ENCODE measurements at regions of chr2 and their contacts with region 1.

Region 1: GRCh38 chr2:29309090-29310029 is 194.1 kb downstream of the CLIP4 start:
- DNase-seq: peak in 7 of 9 experiments; percentile 10 to 67 (median 35)
- ATAC-seq: peak; percentile 40
- H3K4me3 ChIP-seq: no peak overlapping the region
- H3K4me3 Mint-ChIP-seq: no peak overlapping the region
- H3K27ac ChIP-seq: no peak overlapping the region
- H3K27ac Mint-ChIP-seq: no peak overlapping the region
- H3K4me1 ChIP-seq: peaks cover 4% of the 10 kb centered on the region
- H3K4me1 Mint-ChIP-seq: peaks cover 11% of the 10 kb centered on the region
- H3K27me3 ChIP-seq: no peaks in the 10 kb centered on the region
- H3K27me3 Mint-ChIP-seq: peaks cover 24% of the 10 kb centered on the region
- CTCF ChIP-seq: peak; percentile 59

Region 2: DNA sequence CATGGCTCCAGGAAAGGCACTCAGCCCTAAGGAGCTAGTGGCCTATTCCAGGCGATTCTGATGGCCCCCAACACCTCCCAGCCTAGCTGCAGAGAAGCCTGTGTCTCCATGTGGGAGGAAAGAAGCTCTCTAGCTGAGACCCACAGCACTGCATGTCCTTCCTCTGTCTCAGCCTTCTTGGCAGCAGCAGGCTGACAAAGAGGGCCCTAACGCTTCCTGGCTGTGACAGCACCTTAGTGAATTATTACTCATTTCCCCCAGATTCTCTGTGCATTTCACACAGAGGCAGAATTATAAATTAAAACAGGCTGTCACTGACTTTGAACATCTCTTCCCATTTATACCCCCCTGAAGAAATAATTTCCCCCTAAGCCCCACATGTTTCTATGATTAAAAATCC is 12.7 kb after region 1 on chr2:
- CTCF ChIA-PET with region 1: interaction called, 16 read pairs
- POLR2A ChIA-PET with region 1: no interaction called
- intact Hi-C with region 1: no loop called
- DNase-seq: no peak
- ATAC-seq: no peak
- H3K4me3 ChIP-seq: no peak overlapping the region
- H3K4me3 Mint-ChIP-seq: no peak overlapping the region
- H3K27ac ChIP-seq: no peak overlapping the region
- H3K27ac Mint-ChIP-seq: no peak overlapping the region
- H3K4me1 ChIP-seq: no peaks in the 10 kb centered on the region
- H3K4me1 Mint-ChIP-seq: peaks cover 4% of the 10 kb centered on the region
- H3K27me3 ChIP-seq: no peaks in the 10 kb centered on the region
- H3K27me3 Mint-ChIP-seq: peaks cover 24% of the 10 kb centered on the region
- CTCF ChIP-seq: no peak

Region 3: DNA sequence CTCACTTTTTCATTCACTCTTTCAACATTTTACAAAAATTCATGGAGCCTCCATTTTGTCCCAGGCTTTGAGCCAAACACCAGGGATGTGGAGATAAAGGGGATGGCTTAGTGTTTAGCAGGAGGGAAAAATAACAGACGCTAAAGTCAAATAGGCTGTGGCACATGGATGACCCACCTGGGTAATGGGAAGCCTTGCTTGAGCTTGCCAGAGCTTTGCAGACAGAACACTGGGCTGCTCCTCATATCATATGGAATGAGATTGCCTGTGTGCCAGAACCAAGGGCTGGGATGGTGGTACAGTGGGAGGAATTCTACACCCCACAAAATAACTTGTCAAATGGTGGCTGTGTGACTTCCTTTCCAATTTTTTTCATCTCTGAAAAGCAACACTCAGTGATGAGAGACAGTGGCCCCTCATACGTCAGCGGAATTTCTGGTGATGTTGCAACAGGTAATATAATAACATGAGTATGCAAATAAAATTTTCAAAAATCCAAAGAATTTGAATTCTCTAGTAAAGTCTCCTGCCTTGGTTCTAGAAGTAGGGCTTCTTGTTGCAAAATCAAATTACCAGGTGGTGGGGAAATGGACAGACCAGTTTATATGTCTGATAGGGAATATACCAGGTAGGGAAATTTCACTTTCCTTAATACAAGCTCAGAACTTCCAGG is 58.8 kb after region 1 on chr2:
- CTCF ChIA-PET with region 1: no interaction called
- POLR2A ChIA-PET with region 1: no interaction called
- intact Hi-C with region 1: no loop called
- DNase-seq: no peak
- ATAC-seq: no peak
- H3K4me3 ChIP-seq: no peak overlapping the region
- H3K4me3 Mint-ChIP-seq: no peak overlapping the region
- H3K27ac ChIP-seq: no peak overlapping the region
- H3K27ac Mint-ChIP-seq: no peak overlapping the region
- H3K4me1 ChIP-seq: no peaks in the 10 kb centered on the region
- H3K4me1 Mint-ChIP-seq: no peaks in the 10 kb centered on the region
- H3K27me3 ChIP-seq: no peaks in the 10 kb centered on the region
- H3K27me3 Mint-ChIP-seq: peaks cover 34% of the 10 kb centered on the region
- CTCF ChIP-seq: no peak

Region 4: GRCh38 chr2:29700560-29700959 is 391.2 kb after region 1 on chr2:
- CTCF ChIA-PET with region 1: no interaction called
- POLR2A ChIA-PET with region 1: no interaction called
- intact Hi-C with region 1: no loop called
- DNase-seq: no peak
- ATAC-seq: no peak
- H3K4me3 ChIP-seq: no peak overlapping the region
- H3K4me3 Mint-ChIP-seq: no peak overlapping the region
- H3K27ac ChIP-seq: no peak overlapping the region
- H3K27ac Mint-ChIP-seq: no peak overlapping the region
- H3K4me1 ChIP-seq: no peaks in the 10 kb centered on the region
- H3K4me1 Mint-ChIP-seq: no peaks in the 10 kb centered on the region
- H3K27me3 ChIP-seq: no peaks in the 10 kb centered on the region
- H3K27me3 Mint-ChIP-seq: no peaks in the 10 kb centered on the region
- CTCF ChIP-seq: no peak